Activated CD4-positive, alpha-beta T cell treated with anti-CD3 and anti-CD28 coated beads for 36 hours (primary cell): ENCODE measurements at regions of chr19 and their contacts with region 1.

Region 1: DNA sequence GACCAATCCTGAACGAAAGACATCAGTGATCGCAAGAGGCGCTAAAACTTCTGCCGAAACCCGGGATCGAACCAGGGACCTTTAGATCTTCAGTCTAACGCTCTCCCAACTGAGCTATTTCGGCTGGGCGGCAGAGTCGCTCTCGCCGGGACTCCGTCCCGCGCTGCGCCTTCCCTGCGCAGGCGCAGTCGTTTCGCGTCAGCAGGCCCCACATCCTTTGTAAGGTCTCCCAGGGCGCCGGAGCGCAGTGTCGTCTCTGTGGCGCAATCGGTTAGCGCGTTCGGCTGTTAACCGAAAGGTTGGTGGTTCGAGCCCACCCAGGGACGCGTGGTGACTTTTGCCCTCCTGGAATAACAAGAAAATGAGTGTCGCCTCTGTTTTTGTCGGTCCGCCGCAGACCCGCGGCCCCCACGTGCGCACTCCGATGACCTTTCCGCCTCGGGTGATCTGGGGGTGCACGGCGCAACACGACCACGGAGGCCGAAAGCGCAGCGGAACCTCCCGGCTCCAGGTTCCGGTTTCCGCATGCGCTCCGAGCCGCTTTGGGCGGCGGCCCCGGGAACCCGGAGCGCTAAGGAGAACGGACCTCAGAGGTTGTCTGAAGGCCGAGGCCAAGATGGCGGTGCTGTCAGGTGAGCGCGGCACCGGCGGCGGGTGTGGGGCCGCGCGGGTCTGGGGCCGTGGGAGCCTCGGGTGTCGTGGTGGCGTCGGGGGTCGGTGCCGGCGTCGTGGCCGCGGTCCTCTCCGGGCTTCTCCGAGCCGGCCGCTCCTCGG is at the start of gene NDUFS7:
- DNase-seq: peak; percentile 94
- ATAC-seq: peak; percentile 88
- H3K4me3 Mint-ChIP-seq: peak within 1 kb of the TSS; percentile 81
- H3K27ac Mint-ChIP-seq: peak within 1 kb of the TSS; percentile 92
- H3K4me1 Mint-ChIP-seq: peaks cover 21% of the 10 kb centered on the region
- H3K27me3 Mint-ChIP-seq: peaks cover 2% of the 10 kb centered on the region
- total RNA-seq, gene NDUFS7: 93.4 to 113 TPM

Region 2: DNA sequence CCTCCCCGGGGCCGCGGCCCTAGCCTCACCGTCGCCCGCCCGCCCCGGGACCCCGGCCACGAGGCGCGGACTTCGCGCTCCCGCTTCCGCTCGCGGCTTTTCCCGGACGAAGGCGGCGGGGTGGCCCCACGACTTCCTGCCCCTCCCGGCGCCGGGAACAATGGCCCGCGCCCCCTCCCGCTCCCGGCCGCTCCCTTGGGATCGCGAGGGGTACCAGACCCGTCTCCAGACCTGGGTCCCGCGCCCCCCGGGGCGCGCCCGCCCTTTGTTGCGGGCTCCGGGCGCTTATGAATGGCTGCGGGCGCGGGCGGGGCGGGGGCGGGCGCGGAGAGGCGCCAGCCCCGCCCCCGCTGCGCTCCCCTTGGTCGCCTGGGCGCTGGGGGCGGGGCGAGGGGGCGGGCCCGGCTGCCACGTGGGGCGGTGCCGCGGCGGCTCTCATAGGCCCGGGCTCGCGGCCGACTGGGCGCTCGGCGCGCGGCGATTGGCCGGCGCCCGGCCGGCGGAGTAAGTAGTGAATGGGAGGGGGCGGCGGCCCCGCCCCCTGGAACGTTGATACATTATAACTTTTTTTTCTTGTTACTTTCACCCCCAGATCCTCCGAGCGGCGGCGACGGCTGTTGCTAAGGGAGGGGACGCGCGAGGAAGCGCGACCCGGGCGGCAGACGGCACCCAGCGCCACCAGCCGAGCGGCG is 134.1 kb before region 1 on chr19:
- CTCF ChIA-PET with region 1: interaction called, 4 read pairs
- POLR2A ChIA-PET with region 1: no interaction called
- intact Hi-C with region 1: loop called in 1 of 2 experiments (anchors 1 kb)
- DNase-seq: peak; percentile 97
- ATAC-seq: peak; percentile 53
- H3K4me3 Mint-ChIP-seq: peak overlapping the region; percentile 73
- H3K27ac Mint-ChIP-seq: no peak overlapping the region
- H3K4me1 Mint-ChIP-seq: peaks cover 9% of the 10 kb centered on the region
- H3K27me3 Mint-ChIP-seq: no peaks in the 10 kb centered on the region

Region 3: GRCh38 chr19:1355568-1356507 is 27.7 kb before region 1 on chr19:
- CTCF ChIA-PET with region 1: interaction called, 4 read pairs
- POLR2A ChIA-PET with region 1: no interaction called
- intact Hi-C with region 1: loop called (anchors 1 to 2 kb)
- DNase-seq: peak; percentile 51
- ATAC-seq: no peak
- H3K4me3 Mint-ChIP-seq: peak overlapping the region; percentile 77
- H3K27ac Mint-ChIP-seq: peak overlapping the region; percentile 49
- H3K4me1 Mint-ChIP-seq: peaks cover 9% of the 10 kb centered on the region
- H3K27me3 Mint-ChIP-seq: no peaks in the 10 kb centered on the region

Region 4: DNA sequence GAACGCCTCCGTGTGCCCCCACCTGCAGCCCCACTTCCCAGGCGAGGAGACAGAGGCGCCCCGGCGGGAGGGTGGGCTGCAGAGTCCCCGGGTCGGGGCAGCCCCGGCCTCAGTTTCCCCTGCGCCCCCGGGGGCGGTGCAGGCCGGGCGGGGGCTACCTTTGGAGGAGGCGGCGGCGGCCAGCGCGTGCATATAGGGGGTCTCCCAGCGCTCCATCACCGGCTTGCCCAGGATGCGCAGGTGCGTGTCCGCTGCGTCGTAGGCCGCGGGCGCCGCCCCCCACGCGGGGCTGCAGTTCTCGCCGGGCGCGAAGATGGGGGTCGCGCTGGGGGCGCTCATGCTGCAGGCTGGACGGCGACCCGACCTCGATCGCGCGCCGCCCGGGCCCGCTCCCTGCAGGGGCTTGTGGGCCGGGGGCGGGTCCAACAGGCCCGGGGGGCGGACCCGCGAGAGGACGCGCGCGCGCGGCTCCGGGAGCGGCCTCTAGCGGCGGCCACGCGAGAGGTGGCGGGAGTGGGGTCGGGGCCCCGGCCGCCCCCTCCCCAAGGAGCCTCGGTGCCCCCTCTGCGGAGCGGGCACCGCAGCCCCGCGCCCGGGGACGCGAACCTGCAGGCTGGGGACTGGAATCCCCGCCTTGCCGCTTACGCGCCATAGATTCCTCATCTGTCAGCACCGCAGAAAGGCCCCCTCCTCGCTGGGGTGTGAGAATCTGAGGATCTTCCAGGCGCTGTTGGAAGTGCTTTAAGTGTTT is 17.8 kb after region 1 on chr19 and contains the start of gene GAMT:
- CTCF ChIA-PET with region 1: interaction called, 4 read pairs
- POLR2A ChIA-PET with region 1: interaction called, 5 read pairs
- intact Hi-C with region 1: loop called in 1 of 2 experiments (anchors 1 kb)
- DNase-seq: peak; percentile 76
- ATAC-seq: peak; percentile 78
- H3K4me3 Mint-ChIP-seq: peak within 1 kb of the TSS; percentile 71
- H3K27ac Mint-ChIP-seq: no peak within 1 kb of the TSS
- H3K4me1 Mint-ChIP-seq: peaks cover 12% of the 10 kb centered on the region
- H3K27me3 Mint-ChIP-seq: peaks cover 2% of the 10 kb centered on the region
- total RNA-seq, gene GAMT: 30.4 to 31.5 TPM

Region 5: GRCh38 chr19:1445185-1445931 is 61.9 kb after region 1 on chr19:
- CTCF ChIA-PET with region 1: no interaction called
- POLR2A ChIA-PET with region 1: no interaction called
- intact Hi-C with region 1: loop called in 1 of 2 experiments (anchors 1 kb)
- DNase-seq: peak; percentile 89
- ATAC-seq: peak; percentile 82
- H3K4me3 Mint-ChIP-seq: peak overlapping the region; percentile 49
- H3K27ac Mint-ChIP-seq: no peak overlapping the region
- H3K4me1 Mint-ChIP-seq: peaks cover 30% of the 10 kb centered on the region
- H3K27me3 Mint-ChIP-seq: peaks cover 22% of the 10 kb centered on the region

Region 6: DNA sequence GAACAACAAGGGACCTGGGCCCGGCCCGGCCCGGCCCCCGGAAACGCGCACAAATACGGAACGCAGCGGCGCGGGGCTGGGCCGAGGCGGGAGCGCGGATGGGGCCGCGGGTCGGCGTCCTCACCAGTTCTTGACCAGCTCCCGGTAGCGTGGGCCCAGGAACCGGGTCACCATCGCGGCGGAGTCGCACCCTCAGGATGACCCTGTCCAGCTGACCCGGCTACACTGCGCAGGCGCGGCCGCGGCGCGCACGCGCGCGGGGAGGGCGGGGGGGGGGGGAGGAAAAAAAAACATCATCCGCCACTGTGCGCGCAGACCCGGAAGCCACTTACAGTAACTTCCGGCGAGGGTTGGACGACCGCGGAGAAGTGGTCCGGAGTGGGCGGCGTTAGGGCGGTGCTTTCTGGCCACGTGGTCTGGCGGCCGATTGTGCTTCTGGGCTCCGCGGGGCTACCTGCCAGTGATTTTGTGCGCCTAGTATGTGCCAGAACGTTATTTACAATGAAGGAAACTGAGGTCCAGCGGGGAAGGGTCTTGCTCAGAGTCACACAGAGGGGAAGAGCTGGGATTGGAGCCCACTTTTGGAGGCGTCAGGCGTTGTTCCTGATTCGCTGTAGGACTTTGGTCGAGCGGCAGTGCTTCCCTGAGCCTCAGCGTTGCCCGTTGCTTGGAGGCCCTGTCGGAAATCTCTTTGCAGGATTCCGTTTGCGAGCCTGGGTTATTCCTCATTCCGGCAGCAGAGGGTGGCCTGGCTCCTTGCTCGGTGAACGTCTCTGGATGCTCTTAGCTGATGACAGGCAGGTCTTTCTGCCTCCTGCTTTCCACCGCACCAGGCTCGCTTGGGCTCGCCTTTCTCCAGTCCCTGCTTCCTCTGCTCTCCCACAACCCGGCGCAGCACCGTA is 222.0 kb after region 1 on chr19 and contains the start of gene UQCR11:
- CTCF ChIA-PET with region 1: no interaction called
- POLR2A ChIA-PET with region 1: no interaction called
- intact Hi-C with region 1: loop called in 1 of 2 experiments (anchors 1 kb)
- DNase-seq: peak; percentile 96
- ATAC-seq: peak; percentile 89
- H3K4me3 Mint-ChIP-seq: peak within 1 kb of the TSS; percentile 97
- H3K27ac Mint-ChIP-seq: peak within 1 kb of the TSS; percentile 99
- H3K4me1 Mint-ChIP-seq: peaks cover 52% of the 10 kb centered on the region
- H3K27me3 Mint-ChIP-seq: no peaks in the 10 kb centered on the region
- total RNA-seq, gene UQCR11: 152 to 226 TPM

Region 7: DNA sequence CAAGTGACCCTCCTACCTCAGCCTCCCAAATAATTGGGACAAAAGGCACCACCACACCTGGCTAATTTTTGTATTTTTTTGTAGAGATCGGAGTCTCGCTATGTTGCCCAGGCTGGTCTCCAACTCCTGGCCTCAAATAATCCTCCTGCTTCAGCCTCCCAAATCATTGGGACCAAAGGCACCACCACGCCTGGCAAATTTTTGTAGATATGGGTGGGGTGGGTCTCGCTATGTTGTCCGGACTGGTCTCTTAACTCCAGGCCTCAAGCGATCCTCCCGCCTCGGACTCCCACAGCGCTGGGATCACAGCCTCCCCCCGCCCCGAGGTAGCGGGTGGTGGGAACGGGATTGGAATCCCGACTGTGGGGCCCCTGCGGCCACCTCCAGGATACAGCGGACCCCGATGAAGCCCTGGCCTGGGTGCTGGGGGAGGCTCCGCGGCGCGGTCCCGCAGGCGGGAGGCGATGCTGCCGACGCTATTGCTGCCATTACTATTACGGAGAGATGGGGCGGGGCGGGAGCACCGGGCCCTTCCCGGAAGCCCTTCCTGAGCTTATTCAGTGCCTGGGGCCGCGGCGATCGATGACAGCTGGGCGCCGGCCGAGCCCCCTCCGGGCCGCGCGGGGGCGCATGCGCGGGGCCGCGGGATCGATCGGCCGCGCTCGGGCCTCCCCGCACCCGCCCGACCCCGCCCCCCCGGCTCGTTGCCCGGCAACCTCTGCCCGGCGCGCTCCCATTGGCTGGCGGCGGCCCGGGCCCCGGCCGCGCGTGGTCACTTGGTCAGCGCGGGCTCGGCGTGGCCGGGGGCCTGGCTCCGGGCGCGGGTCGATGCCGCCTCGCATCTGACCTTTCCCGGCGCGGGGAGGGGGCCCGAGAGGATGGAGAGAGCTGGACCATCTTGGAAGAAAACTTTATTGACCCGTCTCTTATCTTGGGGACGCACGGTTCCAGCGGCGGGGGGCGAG is 341.9 kb after region 1 on chr19:
- CTCF ChIA-PET with region 1: no interaction called
- POLR2A ChIA-PET with region 1: no interaction called
- intact Hi-C with region 1: no loop called
- DNase-seq: peak; percentile 60
- ATAC-seq: peak; percentile 91
- H3K4me3 Mint-ChIP-seq: no peak overlapping the region
- H3K27ac Mint-ChIP-seq: no peak overlapping the region
- H3K4me1 Mint-ChIP-seq: peaks cover 2% of the 10 kb centered on the region
- H3K27me3 Mint-ChIP-seq: peaks cover 36% of the 10 kb centered on the region

Region 8: GRCh38 chr19:1848399-1849131 is 465.1 kb after region 1 on chr19 and contains the start of gene REXO1:
- CTCF ChIA-PET with region 1: no interaction called
- POLR2A ChIA-PET with region 1: no interaction called
- intact Hi-C with region 1: loop called in 1 of 2 experiments (anchors 1 kb)
- DNase-seq: peak; percentile 98
- ATAC-seq: peak; percentile 72
- H3K4me3 Mint-ChIP-seq: peak within 1 kb of the TSS; percentile 92
- H3K27ac Mint-ChIP-seq: peak within 1 kb of the TSS; percentile 88
- H3K4me1 Mint-ChIP-seq: peaks cover 65% of the 10 kb centered on the region
- H3K27me3 Mint-ChIP-seq: no peaks in the 10 kb centered on the region
- total RNA-seq, gene REXO1: 39.3 to 49.8 TPM